HCT116 (cell line): ENCODE measurements at regions of chr4 and their contacts with region 1.

Region 1: GRCh38 chr4:40056716-40057585 is at the start of gene N4BP2:
- DNase-seq: peak; percentile 57
- ATAC-seq: peak; percentile 64
- H3K4me3 ChIP-seq: peak within 1 kb of the TSS; percentile 72 to 74
- H3K27ac ChIP-seq: peak within 1 kb of the TSS; percentile 91
- H3K4me1 ChIP-seq: peaks cover 13 to 43% of the 10 kb centered on the region in 2 experiments; a peak in 3 of 4 replicates
- H3K27me3 ChIP-seq: no peaks in the 10 kb centered on the region
- CTCF ChIP-seq: peak; percentile 51 to 74 (median 64)
- POLR2A ChIP-seq: no peak
- RAD21 ChIP-seq: peak; percentile 76
- total RNA-seq, gene N4BP2: 7.0 TPM

Region 2: GRCh38 chr4:39846120-39846519 is 210.8 kb before region 1 on chr4:
- CTCF ChIA-PET with region 1: no interaction called
- POLR2A ChIA-PET with region 1: no interaction called
- RAD21 ChIA-PET with region 1: no interaction called
- intact Hi-C with region 1: no loop called
- DNase-seq: no peak
- ATAC-seq: peak; percentile 80
- H3K4me3 ChIP-seq: no peak overlapping the region
- H3K27ac ChIP-seq: no peak overlapping the region
- H3K4me1 ChIP-seq: peaks cover 2 to 23% of the 10 kb centered on the region in 2 experiments; a peak in 3 of 4 replicates
- H3K27me3 ChIP-seq: no peaks in the 10 kb centered on the region
- CTCF ChIP-seq: no peak
- POLR2A ChIP-seq: no peak
- RAD21 ChIP-seq: no peak

Region 3: GRCh38 chr4:39977489-39978377 is 79.2 kb before region 1 on chr4 and contains the start of gene PDS5A:
- CTCF ChIA-PET with region 1: interaction called, 3 read pairs
- POLR2A ChIA-PET with region 1: no interaction called
- RAD21 ChIA-PET with region 1: no interaction called
- intact Hi-C with region 1: loop called (anchors 2 kb)
- DNase-seq: peak; percentile 72
- ATAC-seq: peak; percentile 85
- H3K4me3 ChIP-seq: peak within 1 kb of the TSS; percentile 87 to 92
- H3K27ac ChIP-seq: peak within 1 kb of the TSS; percentile 92
- H3K4me1 ChIP-seq: peaks cover 8 to 15% of the 10 kb centered on the region in 2 experiments
- H3K27me3 ChIP-seq: no peaks in the 10 kb centered on the region
- CTCF ChIP-seq: peak; percentile 65 to 92 (median 89)
- POLR2A ChIP-seq: peak; percentile 77
- RAD21 ChIP-seq: no peak; the same call in none of the 2 replicates
- total RNA-seq, gene PDS5A: 98.3 TPM

Region 4: DNA sequence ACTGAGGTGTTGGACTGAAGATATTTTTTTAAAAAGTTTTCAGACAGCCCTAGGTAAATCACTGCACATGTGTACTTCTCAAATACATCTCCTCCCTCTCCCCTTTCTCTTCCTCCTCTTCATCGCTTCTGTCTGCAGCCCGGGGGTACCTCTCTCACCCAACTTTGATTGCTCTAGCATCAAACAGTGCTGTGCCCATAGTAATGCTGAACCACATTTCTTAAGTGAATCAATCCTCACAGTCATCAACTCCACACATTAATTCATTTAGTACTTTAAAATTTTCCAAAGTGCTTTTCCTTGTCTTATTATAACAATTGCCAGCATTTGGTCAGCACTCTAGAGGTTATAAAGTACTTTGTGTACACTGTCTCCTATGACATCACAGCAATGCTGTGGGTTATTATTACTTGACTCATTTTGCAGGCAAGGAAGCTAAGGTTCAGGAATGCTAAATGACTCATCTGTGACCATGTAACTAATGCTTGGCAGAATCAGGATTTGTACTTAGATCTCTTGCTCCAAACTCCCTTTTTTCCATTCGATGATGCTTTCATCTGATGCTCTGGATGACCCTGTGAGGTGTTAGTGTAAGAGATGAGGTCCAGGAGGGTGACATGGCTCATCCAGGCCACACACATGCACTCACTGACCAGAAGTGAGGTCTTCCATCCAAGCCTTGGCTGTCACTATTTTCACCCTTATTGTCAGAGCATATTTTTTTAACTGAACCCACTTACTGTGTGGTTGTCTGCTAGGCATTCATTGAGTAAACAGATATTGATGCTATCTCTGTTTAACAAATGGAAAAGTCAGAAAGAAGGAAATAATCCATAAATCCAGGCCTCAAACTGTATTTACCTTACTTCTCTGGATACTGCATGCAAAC is 198.7 kb after region 1 on chr4:
- CTCF ChIA-PET with region 1: no interaction called
- POLR2A ChIA-PET with region 1: interaction called, 4 read pairs
- RAD21 ChIA-PET with region 1: no interaction called
- intact Hi-C with region 1: loop called (anchors 5 kb)
- DNase-seq: peak; percentile 97
- ATAC-seq: peak; percentile 71
- H3K4me3 ChIP-seq: peak overlapping the region in 1 of 2 experiments; percentile 37; a peak in 2 of 4 replicates
- H3K27ac ChIP-seq: peak overlapping the region; percentile 71
- H3K4me1 ChIP-seq: peaks cover 32 to 79% of the 10 kb centered on the region in 2 experiments
- H3K27me3 ChIP-seq: no peaks in the 10 kb centered on the region
- CTCF ChIP-seq: no peak
- POLR2A ChIP-seq: no peak
- RAD21 ChIP-seq: peak; percentile 30; the same call in 1 of the 2 replicates

Region 5: DNA sequence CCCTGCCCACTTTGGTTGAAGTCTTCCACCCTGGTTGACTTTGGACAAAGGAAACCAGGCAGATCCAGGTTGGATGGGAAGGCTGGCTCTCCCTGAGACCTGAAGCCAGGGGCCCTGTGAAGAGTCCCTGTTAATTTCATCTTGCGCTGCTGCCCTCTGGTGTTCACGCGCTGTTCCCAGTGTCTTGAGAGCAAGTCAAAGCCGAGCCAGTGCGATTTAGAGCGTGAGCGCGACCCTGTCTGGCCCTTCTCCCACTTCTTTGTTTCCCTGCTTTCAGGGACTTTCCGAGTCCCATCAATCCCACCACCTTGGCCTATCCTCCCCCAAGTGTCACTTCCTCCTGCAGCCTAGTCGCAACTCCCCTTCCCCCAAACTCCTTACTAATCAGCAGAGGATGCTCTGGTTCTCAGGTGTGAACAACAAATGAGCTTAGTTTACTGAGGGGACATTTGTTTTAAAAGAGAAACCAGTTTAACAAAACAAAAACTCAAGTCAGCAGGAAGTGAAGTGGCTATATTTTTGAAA is 252.4 kb after region 1 on chr4:
- CTCF ChIA-PET with region 1: interaction called, 8 read pairs
- POLR2A ChIA-PET with region 1: no interaction called
- RAD21 ChIA-PET with region 1: interaction called in 1 of 2 experiments, 3 read pairs
- intact Hi-C with region 1: loop called (anchors 1 kb)
- DNase-seq: peak; percentile 77
- ATAC-seq: peak; percentile 99
- H3K4me3 ChIP-seq: peak overlapping the region; percentile 11 to 37; a peak in 2 of 4 replicates
- H3K27ac ChIP-seq: no peak overlapping the region
- H3K4me1 ChIP-seq: peaks cover 0 to 8% of the 10 kb centered on the region in 2 experiments; a peak in 2 of 4 replicates
- H3K27me3 ChIP-seq: no peaks in the 10 kb centered on the region
- CTCF ChIP-seq: peak; percentile 87 to 91 (median 88)
- POLR2A ChIP-seq: no peak
- RAD21 ChIP-seq: peak; percentile 92

Region 6: DNA sequence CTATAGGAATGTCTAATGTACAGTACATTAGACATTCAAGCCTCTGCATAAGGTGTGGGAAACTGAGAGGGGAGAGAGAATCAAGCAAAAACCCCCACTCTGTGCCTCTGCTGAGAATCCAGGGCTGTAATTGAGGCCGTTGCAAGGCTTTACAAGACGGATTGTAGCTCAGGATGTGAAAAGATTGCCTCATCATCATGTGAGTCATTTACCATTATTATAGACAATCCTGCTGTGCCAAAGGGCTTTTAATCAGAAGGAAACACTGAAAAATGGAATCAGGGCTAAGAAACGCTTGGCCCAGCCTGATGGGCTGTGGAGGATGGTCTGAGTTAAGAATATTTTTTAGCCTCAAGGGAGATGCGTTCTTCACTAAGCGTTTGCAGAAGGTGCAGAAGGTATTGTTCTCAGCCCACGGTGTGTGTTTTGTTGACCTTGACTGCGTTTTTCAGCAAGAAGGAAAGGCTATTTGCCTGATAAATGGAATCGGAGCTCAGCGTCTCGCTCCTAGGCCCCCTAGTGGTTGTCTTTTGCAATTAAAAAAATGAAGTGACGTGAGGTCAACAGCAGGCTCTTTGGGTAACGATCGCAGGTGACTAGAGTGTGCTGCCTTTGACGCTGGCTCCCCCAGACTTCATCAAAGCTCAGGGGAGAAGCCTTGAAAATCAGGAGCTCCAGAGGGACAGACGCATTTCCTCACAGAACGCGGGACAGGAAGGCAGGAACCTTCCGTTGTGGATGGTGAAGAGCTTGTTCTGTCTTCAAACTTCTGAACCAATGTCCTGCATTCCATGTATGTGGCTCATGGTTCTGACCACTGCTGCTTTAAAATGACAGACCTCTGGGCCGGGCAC is 260.1 kb after region 1 on chr4:
- CTCF ChIA-PET with region 1: interaction called, 13 read pairs
- POLR2A ChIA-PET with region 1: interaction called, 4 read pairs
- RAD21 ChIA-PET with region 1: interaction called, 3 read pairs
- intact Hi-C with region 1: no loop called
- DNase-seq: peak; percentile 80
- ATAC-seq: peak; percentile 88
- H3K4me3 ChIP-seq: peak overlapping the region; percentile 27 to 44
- H3K27ac ChIP-seq: peak overlapping the region; percentile 58
- H3K4me1 ChIP-seq: peaks cover 11 to 28% of the 10 kb centered on the region in 2 experiments; a peak in 3 of 4 replicates
- H3K27me3 ChIP-seq: no peaks in the 10 kb centered on the region
- CTCF ChIP-seq: peak; percentile 67 to 84 (median 73)
- POLR2A ChIP-seq: no peak
- RAD21 ChIP-seq: peak; percentile 69

Region 7: DNA sequence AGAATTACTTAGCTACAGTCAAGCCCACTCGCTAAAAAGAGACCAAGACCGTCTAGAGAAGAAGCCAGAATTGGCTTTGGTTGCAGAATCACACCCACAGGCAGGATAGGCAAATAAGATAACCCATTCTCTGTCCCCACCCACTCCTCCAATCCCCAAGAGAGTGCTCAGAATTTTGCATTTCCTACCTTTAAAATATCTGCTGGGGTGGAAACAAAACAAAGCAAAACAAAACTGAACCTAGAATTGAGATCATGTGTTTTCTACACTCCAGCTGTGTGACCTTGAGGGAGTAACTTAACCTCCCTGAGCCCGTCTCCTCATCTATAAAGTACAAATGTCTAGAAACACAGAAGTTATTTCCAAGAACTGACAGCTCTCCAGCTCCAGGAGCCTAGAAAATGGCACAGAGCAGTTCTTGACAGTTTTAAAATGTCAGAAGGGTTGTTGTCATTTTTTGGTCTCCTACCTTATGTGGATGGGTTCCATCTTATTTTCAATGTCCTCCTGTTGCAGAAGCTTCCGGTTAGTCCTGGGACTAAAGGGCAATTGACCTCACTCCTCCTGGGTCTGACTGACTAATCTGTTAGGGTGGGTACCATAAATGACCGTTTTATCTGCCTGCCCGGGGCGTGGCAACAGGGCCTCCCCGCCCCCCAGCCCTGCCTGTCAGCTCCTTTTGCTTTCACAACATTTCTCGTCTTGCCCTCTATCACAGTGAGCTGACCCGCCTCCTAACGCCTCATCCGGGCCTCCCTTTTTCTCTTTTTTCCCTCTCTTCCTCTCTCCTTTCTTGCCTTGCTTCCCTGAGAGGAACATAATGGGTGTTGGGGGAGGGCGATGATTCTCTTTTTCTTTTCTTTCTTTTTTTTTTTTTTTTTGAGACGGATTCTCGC is 458.7 kb after region 1 on chr4:
- CTCF ChIA-PET with region 1: no interaction called
- POLR2A ChIA-PET with region 1: no interaction called
- RAD21 ChIA-PET with region 1: no interaction called
- intact Hi-C with region 1: loop called (anchors 10 kb)
- DNase-seq: no peak
- ATAC-seq: peak; percentile 63
- H3K4me3 ChIP-seq: no peak overlapping the region
- H3K27ac ChIP-seq: no peak overlapping the region
- H3K4me1 ChIP-seq: peaks cover 13 to 30% of the 10 kb centered on the region in 2 experiments
- H3K27me3 ChIP-seq: no peaks in the 10 kb centered on the region
- CTCF ChIP-seq: no peak
- POLR2A ChIP-seq: no peak
- RAD21 ChIP-seq: no peak

Region 8: DNA sequence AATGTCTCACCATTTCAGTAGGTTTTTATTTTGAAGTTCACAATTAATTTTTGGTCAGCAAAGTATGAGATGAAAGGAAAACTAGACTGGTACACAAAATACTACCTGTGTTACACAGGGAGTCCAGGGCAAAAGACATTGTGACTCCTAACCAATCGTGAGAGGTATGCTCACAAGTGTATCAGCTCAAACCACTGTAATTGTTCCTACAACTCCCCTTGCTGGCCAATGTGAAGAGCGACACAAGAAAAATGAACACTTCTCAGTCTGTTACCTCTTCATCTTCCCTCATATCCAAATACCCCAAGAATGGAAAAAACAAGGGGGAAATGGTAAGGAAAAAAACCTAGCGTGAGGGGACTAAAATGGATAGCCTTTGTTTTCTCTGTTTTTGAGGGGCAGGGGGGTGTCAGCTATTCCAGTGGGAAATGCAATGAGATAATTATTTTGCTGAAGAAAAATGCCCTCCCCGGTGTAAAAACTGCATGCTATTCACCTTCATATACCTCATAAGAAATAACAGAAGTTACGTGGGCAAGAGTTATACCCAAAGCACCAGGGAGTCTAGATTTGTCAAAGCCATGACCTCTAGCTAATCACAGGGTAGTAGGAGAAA is 662.2 kb after region 1 on chr4:
- CTCF ChIA-PET with region 1: no interaction called
- POLR2A ChIA-PET with region 1: no interaction called
- RAD21 ChIA-PET with region 1: interaction called in 1 of 2 experiments, 3 read pairs
- intact Hi-C with region 1: loop called (anchors 2 kb)
- DNase-seq: peak; percentile 61
- ATAC-seq: peak; percentile 98
- H3K4me3 ChIP-seq: no peak overlapping the region
- H3K27ac ChIP-seq: no peak overlapping the region
- H3K4me1 ChIP-seq: peaks cover 0 to 20% of the 10 kb centered on the region in 2 experiments; a peak in 3 of 4 replicates
- H3K27me3 ChIP-seq: no peaks in the 10 kb centered on the region
- CTCF ChIP-seq: peak; percentile 59 to 72 (median 61); a peak in 4 of 6 replicates
- POLR2A ChIP-seq: no peak
- RAD21 ChIP-seq: peak; percentile 94